ENCODE measurements at regions of chr3 and their contacts with region 1.

Region 1: GRCh38 chr3:136752422-136753325 is 496 bp upstream of the STAG1 start:
- DNase-seq: peak; percentile 97
- H3K4me3 Mint-ChIP-seq: peak overlapping the region; percentile 79
- H3K27ac Mint-ChIP-seq: peak overlapping the region; percentile 97
- H3K4me1 Mint-ChIP-seq: peaks cover 17% of the 10 kb centered on the region
- H3K27me3 Mint-ChIP-seq: no peaks in the 10 kb centered on the region
- CTCF ChIP-seq: peak; percentile 6

Region 2: GRCh38 chr3:136196401-136197158 is 556.1 kb before region 1 on chr3:
- CTCF ChIA-PET with region 1: interaction called, 5 read pairs
- POLR2A ChIA-PET with region 1: interaction called, 37 read pairs
- intact Hi-C with region 1: loop called (anchors 2 kb)
- DNase-seq: peak; percentile 100
- H3K4me3 Mint-ChIP-seq: peak overlapping the region; percentile 82
- H3K27ac Mint-ChIP-seq: peak overlapping the region; percentile 93
- H3K4me1 Mint-ChIP-seq: peaks cover 16% of the 10 kb centered on the region
- H3K27me3 Mint-ChIP-seq: no peaks in the 10 kb centered on the region
- CTCF ChIP-seq: no peak

Region 3: DNA sequence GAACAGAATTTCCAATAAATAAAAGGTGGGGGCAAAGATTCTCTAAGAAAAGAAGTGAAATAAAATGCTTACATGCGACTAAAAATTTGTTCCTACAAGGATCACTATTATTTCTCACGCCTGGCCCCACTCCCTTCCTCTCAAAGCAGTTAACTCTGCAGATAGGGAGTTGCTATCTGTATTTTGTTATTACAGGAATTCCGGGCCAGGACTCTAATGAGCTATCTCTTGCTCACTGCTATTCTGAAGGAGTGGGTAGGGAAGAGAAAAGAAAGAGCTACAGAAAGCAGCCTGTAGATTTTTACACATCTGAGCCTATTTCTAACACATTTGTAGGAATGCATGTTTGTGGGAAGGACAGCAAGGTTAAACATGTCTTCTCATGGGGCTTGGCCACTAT is 362.1 kb before region 1 on chr3:
- CTCF ChIA-PET with region 1: interaction called, 60 read pairs
- POLR2A ChIA-PET with region 1: interaction called, 28 read pairs
- intact Hi-C with region 1: loop called (anchors 1 kb)
- DNase-seq: no peak
- H3K4me3 Mint-ChIP-seq: no peak overlapping the region
- H3K27ac Mint-ChIP-seq: no peak overlapping the region
- H3K4me1 Mint-ChIP-seq: no peaks in the 10 kb centered on the region
- H3K27me3 Mint-ChIP-seq: no peaks in the 10 kb centered on the region
- CTCF ChIP-seq: no peak

Region 4: DNA sequence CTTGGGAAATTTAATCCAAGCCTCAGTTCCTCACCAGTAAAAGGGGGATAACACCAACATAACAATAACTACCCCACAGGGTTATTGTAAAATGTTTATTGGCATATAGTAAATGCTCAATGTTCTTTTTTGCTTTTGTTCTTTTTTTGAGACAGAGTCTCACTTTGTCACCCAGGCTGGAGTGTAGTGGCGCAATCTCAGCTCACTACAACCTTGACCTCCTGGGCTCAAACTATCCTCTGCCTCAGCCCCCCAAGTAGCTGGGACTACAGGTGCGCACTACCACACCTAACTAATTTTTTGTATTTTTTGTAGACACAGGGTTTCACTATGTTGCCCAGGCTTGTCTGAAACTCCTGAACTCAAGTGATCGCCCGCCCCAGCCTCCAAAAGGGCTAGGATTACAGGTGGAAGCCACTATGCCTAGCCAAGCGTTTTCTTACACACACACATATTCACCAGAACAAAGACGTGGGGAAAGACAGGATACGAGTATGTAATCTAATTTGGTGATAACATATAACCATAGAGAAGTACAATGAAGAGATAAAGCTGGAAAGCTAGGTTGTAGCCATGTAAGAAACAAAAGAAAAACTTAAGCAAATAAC is 12.2 kb before region 1 on chr3:
- CTCF ChIA-PET with region 1: interaction called, 10 read pairs
- POLR2A ChIA-PET with region 1: interaction called, 7 read pairs
- intact Hi-C with region 1: no loop called
- DNase-seq: no peak
- H3K4me3 Mint-ChIP-seq: no peak overlapping the region
- H3K27ac Mint-ChIP-seq: no peak overlapping the region
- H3K4me1 Mint-ChIP-seq: peaks cover 21% of the 10 kb centered on the region
- H3K27me3 Mint-ChIP-seq: no peaks in the 10 kb centered on the region
- CTCF ChIP-seq: no peak

Region 5: GRCh38 chr3:136919799-136920580 is 167.3 kb after region 1 on chr3:
- CTCF ChIA-PET with region 1: no interaction called
- POLR2A ChIA-PET with region 1: no interaction called
- intact Hi-C with region 1: no loop called
- DNase-seq: no peak
- H3K4me3 Mint-ChIP-seq: no peak overlapping the region
- H3K27ac Mint-ChIP-seq: no peak overlapping the region
- H3K4me1 Mint-ChIP-seq: peaks cover 14% of the 10 kb centered on the region
- H3K27me3 Mint-ChIP-seq: no peaks in the 10 kb centered on the region
- CTCF ChIP-seq: no peak

Region 6: GRCh38 chr3:136949708-136950107 is 197.0 kb after region 1 on chr3:
- CTCF ChIA-PET with region 1: interaction called, 5 read pairs
- POLR2A ChIA-PET with region 1: interaction called, 14 read pairs
- intact Hi-C with region 1: no loop called
- DNase-seq: no peak
- H3K4me3 Mint-ChIP-seq: no peak overlapping the region
- H3K27ac Mint-ChIP-seq: no peak overlapping the region
- H3K4me1 Mint-ChIP-seq: peaks cover 42% of the 10 kb centered on the region
- H3K27me3 Mint-ChIP-seq: no peaks in the 10 kb centered on the region
- CTCF ChIP-seq: peak; percentile 12

Region 7: DNA sequence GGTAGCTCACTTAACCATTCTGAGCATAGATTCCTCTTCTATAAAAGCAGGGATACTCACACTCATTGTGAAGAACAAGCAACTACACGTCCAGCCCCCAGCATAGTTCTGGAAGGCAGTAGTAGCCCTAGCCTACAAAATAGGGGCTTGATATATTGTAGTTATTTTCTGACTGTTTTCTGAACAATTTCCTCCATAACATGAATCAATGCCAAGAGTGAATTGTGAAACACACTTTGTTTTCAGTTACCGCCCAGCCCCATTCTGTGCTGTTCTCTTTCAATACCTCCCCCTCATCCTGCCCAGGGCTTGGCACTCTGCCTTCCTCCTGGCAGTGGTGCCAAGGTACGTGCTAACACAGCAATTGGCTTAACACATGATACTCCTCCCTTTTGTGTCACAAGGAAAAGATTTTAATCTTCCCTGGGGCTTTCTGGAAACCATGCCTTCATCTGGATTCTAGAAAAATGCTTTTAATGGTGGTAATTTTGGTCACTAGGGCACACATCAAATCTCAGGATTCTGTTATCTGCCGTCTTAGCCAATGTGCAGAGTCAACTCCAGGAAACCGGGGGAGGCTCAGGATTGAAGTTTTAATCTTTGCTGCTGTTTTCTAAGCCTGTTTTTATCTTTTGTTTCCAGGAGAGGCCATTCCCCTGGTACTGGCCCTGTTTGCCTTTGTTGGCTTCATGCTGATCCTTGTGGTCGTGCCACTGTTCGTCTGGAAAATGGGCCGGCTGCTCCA is 242.3 kb after region 1 on chr3:
- CTCF ChIA-PET with region 1: interaction called, 14 read pairs
- POLR2A ChIA-PET with region 1: interaction called, 6 read pairs
- intact Hi-C with region 1: loop called (anchors 5 kb)
- DNase-seq: peak; percentile 99
- H3K4me3 Mint-ChIP-seq: peak overlapping the region; percentile 42
- H3K27ac Mint-ChIP-seq: peak overlapping the region; percentile 94
- H3K4me1 Mint-ChIP-seq: peaks cover 61% of the 10 kb centered on the region
- H3K27me3 Mint-ChIP-seq: no peaks in the 10 kb centered on the region
- CTCF ChIP-seq: no peak

Region 8: GRCh38 chr3:137946345-137946973 is 1193.8 kb after region 1 on chr3:
- CTCF ChIA-PET with region 1: no interaction called
- POLR2A ChIA-PET with region 1: no interaction called
- intact Hi-C with region 1: loop called (anchors 2 kb)
- DNase-seq: peak; percentile 81
- H3K4me3 Mint-ChIP-seq: no peak overlapping the region
- H3K27ac Mint-ChIP-seq: no peak overlapping the region
- H3K4me1 Mint-ChIP-seq: no peaks in the 10 kb centered on the region
- H3K27me3 Mint-ChIP-seq: peaks cover 24% of the 10 kb centered on the region
- CTCF ChIP-seq: peak; percentile 77

Measured in MCF 10A (cell line).